Activated CD4-positive, alpha-beta memory T cell treated with anti-CD3 and anti-CD28 coated beads for 36 hours (primary cell): ENCODE measurements at regions of chr16 and their contacts with region 1.

Region 1: DNA sequence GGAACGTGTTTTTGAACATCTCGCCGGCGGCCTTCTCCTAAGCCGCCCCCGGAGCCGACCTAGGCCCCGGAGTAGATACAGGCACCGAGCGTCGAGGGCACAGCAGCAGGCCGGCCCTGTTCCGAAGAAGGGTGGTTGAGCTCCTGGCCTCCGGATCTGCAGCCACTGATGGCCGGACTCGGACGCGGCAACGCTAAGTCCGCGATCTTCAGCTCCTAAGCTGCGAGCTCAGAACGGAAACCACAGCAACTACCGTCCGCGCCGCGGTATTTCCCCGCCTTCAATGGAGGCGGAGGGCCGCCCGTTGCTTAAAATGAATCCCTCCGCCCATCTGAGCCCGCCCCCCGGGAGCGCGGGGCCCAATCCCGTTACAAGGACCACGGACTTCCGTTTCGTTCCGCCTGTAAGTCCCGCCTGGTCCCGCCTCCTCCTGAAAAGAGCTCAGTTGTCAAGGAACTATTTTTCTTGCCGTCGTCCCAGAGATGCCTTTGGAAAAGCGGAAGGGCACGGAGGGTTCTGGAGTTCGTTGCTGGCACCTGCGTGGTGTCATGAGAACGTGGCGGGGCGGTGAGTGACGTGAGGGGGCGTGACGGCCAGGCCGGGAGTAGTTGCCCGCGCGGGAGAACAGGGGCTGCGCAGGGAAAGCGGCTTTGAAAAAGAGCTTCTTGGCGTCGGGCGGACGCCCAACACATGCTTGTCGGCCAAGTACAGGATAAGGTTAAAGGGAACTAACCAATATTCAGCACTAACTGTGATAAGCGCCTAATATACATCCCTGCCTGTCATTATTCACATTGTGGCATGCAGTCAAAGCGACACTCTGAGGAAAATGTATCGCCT is at the start of gene CFAP20:
- DNase-seq: peak; percentile 98
- H3K4me3 Mint-ChIP-seq: peak within 1 kb of the TSS; percentile 86
- H3K27ac Mint-ChIP-seq: peak within 1 kb of the TSS; percentile 82
- H3K4me1 Mint-ChIP-seq: peaks cover 38% of the 10 kb centered on the region
- H3K27me3 Mint-ChIP-seq: no peaks in the 10 kb centered on the region
- total RNA-seq, gene CFAP20: 37.2 to 38.6 TPM

Region 2: DNA sequence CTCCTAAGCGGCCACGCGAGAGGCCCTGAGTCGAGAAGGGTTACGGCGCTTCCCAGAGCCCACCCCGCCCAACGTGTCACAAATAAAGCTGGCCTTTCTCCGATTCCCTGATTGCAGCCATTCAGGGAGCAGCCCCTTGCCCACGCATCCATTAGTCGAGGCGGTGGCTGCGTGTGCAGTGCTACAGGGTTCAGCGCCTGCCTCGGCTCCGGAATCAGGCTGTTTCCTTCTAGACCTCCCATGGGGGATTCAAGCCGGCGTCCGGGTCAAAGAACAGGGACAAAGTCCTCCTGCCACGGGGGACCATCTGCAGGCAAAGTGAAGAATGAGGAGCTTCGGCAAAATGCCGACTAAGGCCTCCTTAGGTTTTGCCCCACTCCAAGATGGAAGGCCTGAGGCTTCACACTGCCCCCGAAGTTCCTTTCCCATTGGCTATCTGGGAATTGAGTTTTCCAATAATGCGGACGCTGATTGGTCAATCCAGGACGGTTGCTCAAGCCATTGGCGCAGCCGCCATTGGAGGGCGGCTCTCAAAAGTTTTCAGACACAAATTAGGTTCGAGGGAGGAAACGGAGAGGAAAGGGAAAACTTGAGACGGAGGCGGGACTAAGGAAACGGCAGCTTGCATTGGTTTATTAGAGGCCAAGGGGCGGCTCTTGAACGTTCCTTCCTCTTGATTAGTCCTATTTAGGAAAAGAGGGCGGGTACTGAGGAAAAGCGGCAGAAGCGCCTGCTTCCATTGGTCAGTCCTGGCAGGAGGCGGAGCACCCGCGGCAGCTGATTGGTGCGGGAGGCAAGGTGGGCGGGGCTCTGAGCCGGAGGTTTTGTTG is 394.2 kb before region 1 on chr16:
- CTCF ChIA-PET with region 1: interaction called, 3 read pairs
- POLR2A ChIA-PET with region 1: interaction called, 3 read pairs
- intact Hi-C with region 1: loop called (anchors 1 kb)
- DNase-seq: peak; percentile 98
- H3K4me3 Mint-ChIP-seq: peak overlapping the region; percentile 99
- H3K27ac Mint-ChIP-seq: peak overlapping the region; percentile 87
- H3K4me1 Mint-ChIP-seq: peaks cover 27% of the 10 kb centered on the region
- H3K27me3 Mint-ChIP-seq: peaks cover 2% of the 10 kb centered on the region

Region 3: DNA sequence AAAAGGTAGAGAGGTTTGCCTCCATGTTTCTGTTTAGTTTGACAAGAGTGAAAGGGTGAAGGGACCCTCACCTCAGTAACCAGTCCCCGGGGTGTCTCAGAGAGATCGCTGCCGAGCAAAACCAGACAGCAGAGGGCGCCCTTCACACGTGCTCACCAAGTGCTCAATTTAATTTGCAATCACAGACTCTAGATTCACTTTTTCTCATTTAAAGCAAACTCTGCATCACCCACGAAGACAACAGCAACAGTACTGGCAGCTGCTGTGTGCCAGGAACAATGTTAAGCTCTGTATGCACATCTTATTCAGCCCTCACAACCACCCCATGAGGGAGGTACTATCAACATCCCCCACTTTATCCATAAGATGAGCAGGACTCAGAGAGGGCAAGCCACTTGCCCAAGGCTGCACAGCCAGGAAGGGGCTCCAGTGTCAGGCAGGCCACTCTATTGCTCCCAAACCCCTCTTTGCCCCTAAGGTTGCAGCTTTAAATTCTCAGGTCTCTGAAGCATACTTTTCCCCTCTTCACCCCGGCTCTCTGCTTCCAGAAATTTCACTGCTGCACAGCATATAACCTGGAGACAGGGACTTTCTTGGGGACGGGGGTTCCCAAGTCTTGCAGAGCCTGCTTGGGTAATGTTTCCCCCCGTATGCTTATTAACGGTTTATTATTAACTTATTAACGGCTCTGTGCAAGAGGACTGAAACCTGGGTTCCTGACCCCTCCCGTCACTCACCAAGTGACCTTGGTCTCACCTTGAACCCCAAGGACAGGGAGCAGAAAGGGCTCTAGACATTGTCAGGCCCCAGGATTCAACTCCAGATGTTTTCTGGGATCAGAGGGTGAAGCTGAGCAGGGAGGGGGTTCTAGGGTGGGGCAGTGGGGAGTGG is 229.3 kb before region 1 on chr16:
- CTCF ChIA-PET with region 1: interaction called, 4 read pairs
- POLR2A ChIA-PET with region 1: no interaction called
- intact Hi-C with region 1: loop called (anchors 5 kb)
- DNase-seq: peak; percentile 84
- H3K4me3 Mint-ChIP-seq: peak overlapping the region; percentile 25
- H3K27ac Mint-ChIP-seq: no peak overlapping the region
- H3K4me1 Mint-ChIP-seq: peaks cover 4% of the 10 kb centered on the region
- H3K27me3 Mint-ChIP-seq: peaks cover 19% of the 10 kb centered on the region

Region 4: GRCh38 chr16:58025351-58026138 is 103.8 kb before region 1 on chr16 and contains the start of gene MMP15:
- CTCF ChIA-PET with region 1: interaction called, 5 read pairs
- POLR2A ChIA-PET with region 1: interaction called, 10 read pairs
- intact Hi-C with region 1: loop called (anchors 2 kb)
- DNase-seq: peak; percentile 77
- H3K4me3 Mint-ChIP-seq: peak within 1 kb of the TSS; percentile 81
- H3K27ac Mint-ChIP-seq: peak within 1 kb of the TSS; percentile 56
- H3K4me1 Mint-ChIP-seq: peaks cover 9% of the 10 kb centered on the region
- H3K27me3 Mint-ChIP-seq: no peaks in the 10 kb centered on the region
- total RNA-seq, gene MMP15: 0.46 to 0.71 TPM

Region 5: DNA sequence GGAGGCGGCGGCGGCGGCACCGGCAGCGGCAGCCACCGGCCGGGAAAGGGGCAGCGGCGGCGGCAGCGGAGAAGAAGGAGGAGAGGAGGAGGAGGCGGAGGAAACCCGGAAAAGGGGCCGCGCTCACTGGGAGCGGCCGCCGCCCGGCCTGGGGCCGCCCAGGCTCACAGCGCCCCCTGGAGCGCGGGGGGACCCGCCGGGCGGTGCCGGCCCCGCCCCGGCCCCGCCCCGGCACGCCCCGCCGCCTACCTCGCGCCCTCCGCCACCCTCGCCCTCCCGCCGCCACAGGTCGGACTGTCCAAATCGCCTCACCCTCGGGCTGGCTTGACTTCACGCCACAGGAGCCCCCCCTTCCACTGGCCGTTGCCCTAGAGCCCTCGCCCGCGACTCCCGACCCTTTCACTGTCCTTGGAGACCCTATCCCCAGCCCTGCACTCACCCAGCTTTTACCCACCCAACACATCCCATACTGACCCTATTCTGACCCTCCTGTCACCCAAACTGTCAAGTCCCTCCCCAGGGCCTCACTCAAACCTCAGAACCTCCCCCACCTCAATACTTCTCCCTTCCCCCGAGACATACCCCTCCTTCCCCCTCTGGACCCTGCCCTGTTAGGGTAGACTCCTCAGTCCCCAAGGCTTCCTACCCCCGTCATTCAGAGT is 68.8 kb after region 1 on chr16 and contains the start of gene CSNK2A2:
- CTCF ChIA-PET with region 1: interaction called, 7 read pairs
- POLR2A ChIA-PET with region 1: interaction called, 3 read pairs
- intact Hi-C with region 1: loop called (anchors 2 kb)
- DNase-seq: peak; percentile 76
- H3K4me3 Mint-ChIP-seq: peak within 1 kb of the TSS; percentile 89
- H3K27ac Mint-ChIP-seq: peak within 1 kb of the TSS; percentile 54
- H3K4me1 Mint-ChIP-seq: peaks cover 33% of the 10 kb centered on the region
- H3K27me3 Mint-ChIP-seq: peaks cover 8% of the 10 kb centered on the region
- total RNA-seq, gene CSNK2A2: 76.9 to 82.0 TPM

Region 6: DNA sequence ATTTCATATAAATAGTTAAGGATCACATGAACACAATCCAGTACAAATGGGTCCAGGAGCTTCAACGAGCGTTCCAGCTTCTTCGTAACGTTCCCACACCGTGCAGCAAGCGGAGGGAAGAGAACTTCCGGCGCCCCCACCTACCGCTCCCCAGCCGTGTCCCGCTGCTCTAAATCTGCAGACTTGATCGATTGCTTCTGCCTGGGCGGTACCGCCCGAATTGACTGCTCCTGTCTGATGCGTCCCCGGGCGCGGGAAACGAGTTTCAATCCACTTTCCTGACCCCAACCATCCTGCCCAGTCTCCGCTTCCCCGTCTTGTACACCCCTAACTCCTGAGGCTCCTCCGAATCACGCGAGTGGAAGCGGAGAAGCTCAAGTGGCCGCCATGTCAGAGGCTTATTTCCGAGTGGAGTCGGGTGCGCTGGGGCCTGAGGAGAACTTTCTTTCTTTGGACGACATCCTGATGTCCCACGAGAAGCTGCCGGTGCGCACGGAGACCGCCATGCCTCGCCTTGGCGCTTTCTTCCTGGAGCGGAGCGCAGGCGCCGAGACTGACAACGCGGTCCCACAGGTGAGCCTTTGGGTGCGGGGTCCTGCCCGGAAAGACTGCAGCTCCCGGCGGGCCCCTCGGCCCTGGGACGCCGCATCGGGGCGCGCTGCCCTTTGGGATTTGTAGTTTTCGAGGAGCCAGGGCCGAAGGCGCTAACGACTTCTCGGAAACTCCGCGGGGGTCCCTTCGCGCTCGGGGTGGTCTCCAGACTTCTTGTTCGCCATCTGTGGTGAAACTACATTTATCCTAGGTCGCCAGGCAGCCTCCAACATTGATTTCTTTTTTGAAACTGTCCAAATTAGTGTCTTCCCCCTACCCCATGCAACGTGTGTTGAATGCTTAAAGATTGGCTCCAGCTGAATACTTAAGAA is 263.2 kb after region 1 on chr16 and contains the start of gene GINS3:
- CTCF ChIA-PET with region 1: no interaction called
- POLR2A ChIA-PET with region 1: no interaction called
- intact Hi-C with region 1: loop called (anchors 2 kb)
- DNase-seq: peak; percentile 92
- H3K4me3 Mint-ChIP-seq: peak within 1 kb of the TSS; percentile 95
- H3K27ac Mint-ChIP-seq: peak within 1 kb of the TSS; percentile 96
- H3K4me1 Mint-ChIP-seq: peaks cover 11% of the 10 kb centered on the region
- H3K27me3 Mint-ChIP-seq: no peaks in the 10 kb centered on the region
- total RNA-seq, gene GINS3: 13.8 to 14.0 TPM

Region 7: DNA sequence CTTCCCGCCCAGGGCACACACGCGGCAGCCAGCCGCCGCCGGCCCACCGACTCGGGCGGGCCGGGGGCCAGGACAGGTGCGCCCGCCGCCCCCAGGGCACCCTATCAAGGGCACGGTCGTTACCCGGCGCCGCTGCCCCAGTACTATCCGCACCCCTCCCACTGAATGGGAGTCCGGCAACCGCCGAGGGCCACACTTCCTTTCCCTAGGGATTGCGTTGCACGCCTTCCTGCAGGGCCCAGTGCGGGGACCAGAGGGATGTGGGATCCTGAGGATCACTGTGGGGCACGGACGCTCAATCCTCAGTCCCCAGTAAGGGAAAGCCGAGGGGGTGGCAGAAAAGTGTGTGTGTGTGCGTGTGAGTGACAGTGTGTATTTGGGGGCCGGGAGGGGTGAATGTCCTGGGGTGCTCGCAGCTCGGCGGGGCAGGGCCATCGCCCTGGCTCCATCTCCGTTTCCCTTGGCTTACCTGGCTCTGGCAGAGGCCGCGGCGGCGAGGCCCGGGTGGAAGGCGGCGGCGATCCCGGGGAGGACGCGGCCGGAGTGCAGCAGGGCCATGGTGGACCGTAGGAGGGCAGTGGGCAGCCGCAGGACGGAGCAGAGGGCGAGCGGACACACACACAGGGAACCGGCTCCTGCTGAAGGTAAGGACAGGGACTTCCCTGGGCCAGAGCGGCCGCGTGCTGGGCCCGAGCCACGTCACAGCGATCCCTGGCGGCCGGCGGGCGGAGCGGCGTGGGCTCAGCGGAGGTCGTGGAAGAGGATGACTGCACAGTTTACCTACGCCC is 604.5 kb after region 1 on chr16 and contains the start of gene GOT2:
- CTCF ChIA-PET with region 1: no interaction called
- POLR2A ChIA-PET with region 1: no interaction called
- intact Hi-C with region 1: loop called (anchors 1 kb)
- DNase-seq: peak; percentile 88
- H3K4me3 Mint-ChIP-seq: peak within 1 kb of the TSS; percentile 98
- H3K27ac Mint-ChIP-seq: peak within 1 kb of the TSS; percentile 88
- H3K4me1 Mint-ChIP-seq: peaks cover 38% of the 10 kb centered on the region
- H3K27me3 Mint-ChIP-seq: no peaks in the 10 kb centered on the region
- total RNA-seq, gene GOT2: 125 to 127 TPM